Naive thymus-derived CD4-positive, alpha-beta T cell (primary cell): ENCODE measurements at regions of chr5 and their contacts with region 1.

Region 1: GRCh38 chr5:149551200-149552037 is at the start of gene CSNK1A1:
- DNase-seq: peak; percentile 97 to 99 (median 98)
- ATAC-seq: peak; percentile 93
- H3K4me3 ChIP-seq: peak within 1 kb of the TSS; percentile 97
- H3K4me3 Mint-ChIP-seq: peak within 1 kb of the TSS; percentile 91 to 99 (median 98)
- H3K27ac ChIP-seq: peak within 1 kb of the TSS; percentile 96
- H3K27ac Mint-ChIP-seq: peak within 1 kb of the TSS; percentile 95 to 99 (median 97)
- H3K4me1 ChIP-seq: peaks cover 27 to 31% of the 10 kb centered on the region in 2 donors
- H3K4me1 Mint-ChIP-seq: peaks cover 15 to 36% (median 32%) of the 10 kb centered on the region in 7 donors
- H3K27me3 ChIP-seq: no peaks in the 10 kb centered on the region
- H3K27me3 Mint-ChIP-seq: peaks cover 0 to 5% (median 0%) of the 10 kb centered on the region in 5 donors
- total RNA-seq, gene CSNK1A1: 168 to 217 (median 181) TPM

Region 2: DNA sequence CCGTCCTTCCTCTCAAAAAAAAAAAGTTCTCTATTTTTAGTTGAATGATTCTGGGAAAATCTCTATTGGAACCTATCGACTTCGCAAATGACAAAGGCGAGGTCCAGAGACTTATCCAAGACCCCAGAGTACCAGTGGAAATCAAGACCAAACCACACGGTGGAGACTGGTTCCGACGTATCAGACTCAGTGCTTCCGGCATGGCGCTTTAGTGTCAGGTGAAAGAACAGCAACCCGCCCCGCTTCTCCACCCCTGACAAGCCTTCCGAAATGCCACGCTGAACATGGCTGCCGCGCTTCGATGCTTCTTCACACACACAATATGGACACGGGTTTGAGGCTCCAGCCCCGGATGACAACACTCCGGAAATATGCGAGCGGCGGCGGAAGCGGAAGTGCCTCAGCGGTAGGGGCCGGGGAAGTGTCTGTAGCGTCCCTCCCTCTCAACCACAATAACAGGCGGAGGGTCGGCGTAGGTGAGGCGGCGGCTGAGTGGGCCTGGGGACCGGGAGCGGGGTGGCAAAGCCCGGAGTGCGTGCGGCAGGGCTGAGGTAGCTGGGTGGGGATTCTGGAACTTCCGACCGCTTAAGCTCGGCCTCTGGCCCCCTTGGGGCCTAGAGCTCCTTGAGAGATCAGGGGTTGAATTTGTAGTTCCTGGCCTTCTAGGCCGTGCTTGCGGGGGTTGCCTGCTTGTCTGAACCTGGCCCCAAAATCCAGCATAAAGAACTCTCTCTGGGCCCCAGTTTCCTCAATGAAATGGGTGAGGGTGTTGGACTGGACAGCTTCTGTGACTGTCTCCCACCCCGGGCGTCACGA is 1167.6 kb before region 1 on chr5 and contains the start of gene FBXO38:
- CTCF ChIA-PET with region 1: no interaction called
- POLR2A ChIA-PET with region 1: interaction called, 7 read pairs
- intact Hi-C with region 1: loop called (anchors 1 to 10 kb)
- DNase-seq: peak; percentile 88 to 99 (median 98)
- ATAC-seq: peak; percentile 97
- H3K4me3 ChIP-seq: peak within 1 kb of the TSS; percentile 66
- H3K4me3 Mint-ChIP-seq: peak within 1 kb of the TSS; percentile 84 to 97 (median 88)
- H3K27ac ChIP-seq: peak within 1 kb of the TSS; percentile 91
- H3K27ac Mint-ChIP-seq: peak within 1 kb of the TSS; percentile 93 to 99 (median 98)
- H3K4me1 ChIP-seq: peaks cover 18 to 41% of the 10 kb centered on the region in 2 donors
- H3K4me1 Mint-ChIP-seq: peaks cover 43 to 78% (median 71%) of the 10 kb centered on the region in 7 donors
- H3K27me3 ChIP-seq: no peaks in the 10 kb centered on the region
- H3K27me3 Mint-ChIP-seq: no peaks in the 10 kb centered on the region
- total RNA-seq, gene FBXO38: 59.2 to 80.0 (median 65.6) TPM

Region 3: GRCh38 chr5:149240354-149240998 is 310.9 kb before region 1 on chr5:
- CTCF ChIA-PET with region 1: no interaction called
- POLR2A ChIA-PET with region 1: interaction called, 3 read pairs
- intact Hi-C with region 1: loop called in 1 of 2 experiments (anchors 1 kb)
- DNase-seq: peak; percentile 46 to 94 (median 90)
- ATAC-seq: peak; percentile 93
- H3K4me3 ChIP-seq: peak overlapping the region; percentile 2
- H3K4me3 Mint-ChIP-seq: peak overlapping the region; percentile 38 to 79 (median 66)
- H3K27ac ChIP-seq: peak overlapping the region; percentile 67
- H3K27ac Mint-ChIP-seq: peak overlapping the region; percentile 83 to 98 (median 93)
- H3K4me1 ChIP-seq: peaks cover 21 to 39% of the 10 kb centered on the region in 2 donors
- H3K4me1 Mint-ChIP-seq: peaks cover 8 to 71% (median 43%) of the 10 kb centered on the region in 7 donors
- H3K27me3 ChIP-seq: no peaks in the 10 kb centered on the region
- H3K27me3 Mint-ChIP-seq: peaks cover 0 to 23% (median 1%) of the 10 kb centered on the region in 5 donors

Region 4: DNA sequence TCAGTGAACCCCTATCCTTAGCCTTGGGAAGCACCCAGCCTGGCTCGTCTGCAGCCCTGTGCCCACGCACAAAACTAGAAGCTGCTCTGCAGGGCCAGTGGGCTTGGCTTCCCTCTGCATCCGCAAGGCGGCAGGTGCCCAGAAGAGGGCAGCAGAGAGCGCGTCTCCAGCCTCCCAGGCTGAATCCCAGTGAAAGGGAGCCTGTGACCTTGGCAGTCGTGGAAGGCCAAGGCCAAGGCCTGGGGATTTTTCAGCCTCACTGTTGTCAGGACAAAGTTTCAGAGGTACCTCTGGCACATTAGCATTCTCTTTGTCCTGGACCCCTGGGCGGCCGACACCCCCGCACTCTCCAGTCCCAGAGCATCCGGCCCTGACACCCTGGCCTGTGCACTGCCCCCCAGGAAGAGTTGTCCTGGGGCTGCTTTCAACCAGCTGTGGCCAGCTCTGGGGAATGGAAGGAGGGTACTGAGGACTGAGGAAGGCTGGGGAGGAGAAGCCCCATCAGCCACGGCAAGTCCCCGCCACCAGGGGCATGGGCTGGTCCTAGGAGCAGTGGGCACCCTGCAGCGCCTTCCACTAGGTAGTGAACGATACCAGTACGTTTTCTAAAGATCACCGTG is 108.7 kb before region 1 on chr5:
- CTCF ChIA-PET with region 1: interaction called, 4 read pairs
- POLR2A ChIA-PET with region 1: interaction called, 5 read pairs
- intact Hi-C with region 1: loop called in 1 of 2 experiments (anchors 1 kb)
- DNase-seq: peak; percentile 16 to 82 (median 51)
- ATAC-seq: peak; percentile 81
- H3K4me3 ChIP-seq: no peak overlapping the region
- H3K4me3 Mint-ChIP-seq: no peak overlapping the region
- H3K27ac ChIP-seq: no peak overlapping the region
- H3K27ac Mint-ChIP-seq: peak overlapping the region in 3 of 9 donors; percentile 2 to 52 (median 15)
- H3K4me1 ChIP-seq: no peaks in the 10 kb centered on the region
- H3K4me1 Mint-ChIP-seq: peaks cover 1 to 20% (median 12%) of the 10 kb centered on the region in 7 donors
- H3K27me3 ChIP-seq: no peaks in the 10 kb centered on the region
- H3K27me3 Mint-ChIP-seq: no peaks in the 10 kb centered on the region

Region 5: GRCh38 chr5:149466457-149466972 is 84.9 kb before region 1 on chr5:
- CTCF ChIA-PET with region 1: no interaction called
- POLR2A ChIA-PET with region 1: no interaction called
- intact Hi-C with region 1: no loop called
- DNase-seq: no peak
- ATAC-seq: no peak
- H3K4me3 ChIP-seq: no peak overlapping the region
- H3K4me3 Mint-ChIP-seq: no peak overlapping the region
- H3K27ac ChIP-seq: no peak overlapping the region
- H3K27ac Mint-ChIP-seq: no peak overlapping the region
- H3K4me1 ChIP-seq: no peaks in the 10 kb centered on the region
- H3K4me1 Mint-ChIP-seq: no peaks in the 10 kb centered on the region
- H3K27me3 ChIP-seq: no peaks in the 10 kb centered on the region
- H3K27me3 Mint-ChIP-seq: peaks cover 0 to 9% (median 0%) of the 10 kb centered on the region in 5 donors

Region 6: GRCh38 chr5:149526845-149527580 is 24.4 kb before region 1 on chr5:
- CTCF ChIA-PET with region 1: no interaction called
- POLR2A ChIA-PET with region 1: interaction called, 3 read pairs
- intact Hi-C with region 1: loop called in 1 of 2 experiments (anchors 2 kb)
- DNase-seq: no peak
- ATAC-seq: no peak
- H3K4me3 ChIP-seq: no peak overlapping the region
- H3K4me3 Mint-ChIP-seq: peak overlapping the region in 9 of 10 donors; percentile 12 to 65 (median 51)
- H3K27ac ChIP-seq: no peak overlapping the region
- H3K27ac Mint-ChIP-seq: peak overlapping the region in 8 of 9 donors; percentile 0 to 86 (median 54)
- H3K4me1 ChIP-seq: peaks cover 37 to 51% of the 10 kb centered on the region in 2 donors
- H3K4me1 Mint-ChIP-seq: peaks cover 61 to 100% (median 89%) of the 10 kb centered on the region in 7 donors
- H3K27me3 ChIP-seq: no peaks in the 10 kb centered on the region
- H3K27me3 Mint-ChIP-seq: no peaks in the 10 kb centered on the region

Region 7: GRCh38 chr5:149596713-149597112 is 45.3 kb after region 1 on chr5:
- CTCF ChIA-PET with region 1: no interaction called
- POLR2A ChIA-PET with region 1: no interaction called
- intact Hi-C with region 1: no loop called
- DNase-seq: no peak
- ATAC-seq: no peak
- H3K4me3 ChIP-seq: no peak overlapping the region
- H3K4me3 Mint-ChIP-seq: no peak overlapping the region
- H3K27ac ChIP-seq: no peak overlapping the region
- H3K27ac Mint-ChIP-seq: no peak overlapping the region
- H3K4me1 ChIP-seq: no peaks in the 10 kb centered on the region
- H3K4me1 Mint-ChIP-seq: peaks cover 0 to 4% (median 0%) of the 10 kb centered on the region in 7 donors
- H3K27me3 ChIP-seq: no peaks in the 10 kb centered on the region
- H3K27me3 Mint-ChIP-seq: peaks cover 0 to 7% (median 3%) of the 10 kb centered on the region in 5 donors

Region 8: GRCh38 chr5:149731639-149732323 is 180.4 kb after region 1 on chr5:
- CTCF ChIA-PET with region 1: no interaction called
- POLR2A ChIA-PET with region 1: interaction called, 3 read pairs
- intact Hi-C with region 1: loop called in 1 of 2 experiments (anchors 2 kb)
- DNase-seq: peak; percentile 52 to 84 (median 67)
- ATAC-seq: peak; percentile 64
- H3K4me3 ChIP-seq: peak overlapping the region; percentile 84
- H3K4me3 Mint-ChIP-seq: peak overlapping the region; percentile 77 to 92 (median 87)
- H3K27ac ChIP-seq: peak overlapping the region; percentile 67
- H3K27ac Mint-ChIP-seq: peak overlapping the region in 8 of 9 donors; percentile 38 to 93 (median 78)
- H3K4me1 ChIP-seq: no peaks in the 10 kb centered on the region
- H3K4me1 Mint-ChIP-seq: peaks cover 0 to 17% (median 8%) of the 10 kb centered on the region in 7 donors
- H3K27me3 ChIP-seq: no peaks in the 10 kb centered on the region
- H3K27me3 Mint-ChIP-seq: peaks cover 0 to 18% (median 0%) of the 10 kb centered on the region in 5 donors

Region 9: DNA sequence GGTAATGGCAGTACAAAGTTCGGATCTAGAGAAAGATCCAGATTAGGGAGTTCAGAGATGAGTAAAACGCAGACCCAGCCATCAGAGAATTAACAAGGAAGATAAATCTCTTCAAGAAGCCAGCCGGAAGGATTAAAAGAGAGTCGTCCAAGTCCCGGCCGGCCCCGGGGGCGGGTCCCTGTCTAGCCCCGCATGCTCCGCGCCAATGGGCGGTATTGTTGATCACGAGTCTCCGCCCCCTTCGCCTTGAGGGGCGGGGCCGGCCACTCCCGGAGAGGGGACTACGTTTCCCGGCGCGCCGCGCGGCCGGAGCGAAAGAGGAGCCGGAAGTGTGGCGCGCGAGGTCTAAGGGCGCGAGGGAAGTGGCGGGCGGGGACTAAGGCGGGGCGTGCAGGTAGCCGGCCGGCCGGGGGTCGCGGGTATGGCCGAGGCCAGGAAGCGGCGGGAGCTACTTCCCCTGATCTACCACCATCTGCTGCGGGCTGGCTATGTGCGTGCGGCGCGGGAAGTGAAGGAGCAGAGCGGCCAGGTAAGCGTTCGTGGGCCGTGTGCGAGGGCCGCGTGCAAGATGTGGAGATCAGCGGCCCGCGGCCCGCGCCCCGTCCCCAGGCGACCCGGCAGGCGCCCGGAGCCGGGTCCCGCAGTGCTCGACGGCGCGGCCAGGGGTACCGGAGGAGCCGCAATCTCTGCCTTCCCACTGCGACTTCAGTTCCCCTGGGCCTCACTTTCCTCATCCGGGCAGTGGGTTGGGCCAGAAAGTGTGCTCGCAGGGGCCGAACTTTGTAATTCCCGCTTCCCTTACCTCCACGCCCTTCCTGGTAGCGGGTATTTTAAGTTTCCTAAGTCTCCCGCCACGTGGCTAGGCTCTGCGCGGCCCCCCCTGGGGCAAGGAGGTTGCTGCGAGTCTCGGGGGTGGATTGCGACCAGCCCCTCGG is 806.2 kb after region 1 on chr5 and contains the start of gene TCOF1:
- CTCF ChIA-PET with region 1: no interaction called
- POLR2A ChIA-PET with region 1: no interaction called
- intact Hi-C with region 1: loop called (anchors 1 to 2 kb)
- DNase-seq: peak; percentile 94 to 98 (median 97)
- ATAC-seq: peak; percentile 100
- H3K4me3 ChIP-seq: peak within 1 kb of the TSS; percentile 62
- H3K4me3 Mint-ChIP-seq: peak within 1 kb of the TSS; percentile 85 to 95 (median 91)
- H3K27ac ChIP-seq: peak within 1 kb of the TSS; percentile 81
- H3K27ac Mint-ChIP-seq: peak within 1 kb of the TSS; percentile 87 to 97 (median 96)
- H3K4me1 ChIP-seq: peaks cover 23 to 24% of the 10 kb centered on the region in 2 donors
- H3K4me1 Mint-ChIP-seq: peaks cover 35 to 54% (median 48%) of the 10 kb centered on the region in 7 donors
- H3K27me3 ChIP-seq: no peaks in the 10 kb centered on the region
- H3K27me3 Mint-ChIP-seq: peaks cover 0 to 2% (median 0%) of the 10 kb centered on the region in 5 donors
- total RNA-seq, gene TCOF1: 45.9 to 60.0 (median 54.6) TPM